ENCODE measurements at regions of chr5 and their contacts with region 1.

Region 1: GRCh38 chr5:72018146-72018803 is 89.0 kb upstream of the MAP1B start:
- DNase-seq: peak; percentile 36 to 91
- H3K4me3 ChIP-seq: no peak overlapping the region
- H3K27ac ChIP-seq: no peak overlapping the region
- H3K4me1 ChIP-seq: peaks cover 0 to 5% (median 1%) of the 10 kb centered on the region in 4 experiments; a peak in 2 of 7 replicates
- H3K27me3 ChIP-seq: no peaks in the 10 kb centered on the region
- CTCF ChIP-seq: peak; percentile 74 to 98 (median 76)
- EP300 ChIP-seq: no peak
- POLR2A ChIP-seq: no peak
- RAD21 ChIP-seq: peak; percentile 77 to 82

Region 2: DNA sequence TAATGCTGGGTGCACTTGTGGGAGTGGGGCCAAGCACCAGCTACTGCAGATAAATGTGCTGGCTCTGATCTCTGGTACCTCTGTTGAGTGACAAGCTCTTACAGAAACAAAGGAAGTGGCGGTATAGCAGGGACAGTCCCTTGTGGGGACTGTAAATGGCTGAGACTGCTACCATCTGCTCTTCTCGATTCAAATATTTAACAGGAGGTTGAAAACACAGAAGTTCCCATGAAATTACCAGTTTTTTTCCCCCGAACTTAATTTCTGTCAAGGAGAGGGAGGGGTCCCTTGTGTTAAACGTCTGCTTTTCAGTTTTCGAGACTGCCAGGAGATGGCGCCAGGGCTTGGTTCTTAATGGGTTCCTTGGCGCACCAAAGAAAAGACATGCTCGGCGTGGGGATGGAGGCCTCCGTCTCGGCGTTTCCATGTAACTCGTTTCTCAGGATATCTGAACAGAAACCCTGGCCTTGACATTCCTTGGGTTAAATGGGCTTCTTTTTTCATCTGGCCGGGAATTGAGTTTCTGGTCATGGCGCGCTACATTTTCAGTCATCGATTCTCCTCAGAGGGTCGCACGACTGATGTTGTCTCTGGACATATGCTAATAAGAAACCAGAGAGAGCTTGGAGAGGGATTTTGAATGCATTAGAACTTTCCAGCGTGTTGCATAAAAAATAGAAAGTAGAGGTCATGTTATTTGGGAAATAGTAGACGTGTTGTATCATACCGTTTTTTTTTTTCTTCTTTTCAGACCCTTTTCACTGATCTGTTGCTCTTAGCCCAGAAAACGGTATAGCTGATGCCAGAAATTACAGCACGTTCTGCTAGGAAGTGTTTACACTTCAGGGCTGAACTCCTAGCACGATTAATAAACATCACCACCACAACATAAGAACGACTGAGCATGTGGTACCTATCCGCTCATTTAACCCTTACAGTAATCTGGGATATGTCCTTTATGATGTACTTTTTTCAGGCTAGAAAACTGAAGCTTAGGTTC is 235.2 kb before region 1 on chr5:
- CTCF ChIA-PET with region 1: interaction called, 24 read pairs
- POLR2A ChIA-PET with region 1: no interaction called
- DNase-seq: peak; percentile 54 to 89
- H3K4me3 ChIP-seq: no peak overlapping the region
- H3K27ac ChIP-seq: no peak overlapping the region
- H3K4me1 ChIP-seq: peaks cover 0 to 6% (median 4%) of the 10 kb centered on the region in 4 experiments; a peak in 5 of 7 replicates
- H3K27me3 ChIP-seq: no peaks in the 10 kb centered on the region
- CTCF ChIP-seq: peak; percentile 64 to 80 (median 79)
- EP300 ChIP-seq: no peak
- POLR2A ChIP-seq: no peak
- RAD21 ChIP-seq: peak; percentile 93 to 96

Region 3: DNA sequence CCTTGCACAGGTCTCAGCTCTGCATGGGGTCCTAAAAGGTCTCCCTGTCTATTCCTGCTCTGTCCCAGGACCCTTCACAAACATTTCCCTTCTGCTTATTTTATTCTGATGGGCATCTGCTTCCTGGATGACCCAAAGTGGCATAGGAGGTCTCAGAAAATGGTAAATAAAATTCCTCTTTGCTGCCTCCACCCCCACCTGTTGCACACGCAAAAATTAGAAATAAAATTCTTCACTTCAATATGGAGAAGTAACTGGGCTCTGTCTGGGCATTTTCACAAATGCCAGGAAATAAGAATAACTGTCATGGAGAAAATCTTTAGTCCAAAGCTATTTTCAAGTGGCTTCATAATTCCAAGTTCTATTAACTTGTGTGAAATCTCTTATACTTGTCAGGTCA is 17.6 kb before region 1 on chr5:
- CTCF ChIA-PET with region 1: interaction called, 17 read pairs
- POLR2A ChIA-PET with region 1: interaction called, 3 read pairs
- DNase-seq: no peak
- H3K4me3 ChIP-seq: no peak overlapping the region
- H3K27ac ChIP-seq: no peak overlapping the region
- H3K4me1 ChIP-seq: peaks cover 0 to 1% (median under 1%) of the 10 kb centered on the region in 4 experiments; a peak in 2 of 7 replicates
- H3K27me3 ChIP-seq: no peaks in the 10 kb centered on the region
- CTCF ChIP-seq: no peak
- EP300 ChIP-seq: no peak
- POLR2A ChIP-seq: no peak
- RAD21 ChIP-seq: no peak

Region 4: DNA sequence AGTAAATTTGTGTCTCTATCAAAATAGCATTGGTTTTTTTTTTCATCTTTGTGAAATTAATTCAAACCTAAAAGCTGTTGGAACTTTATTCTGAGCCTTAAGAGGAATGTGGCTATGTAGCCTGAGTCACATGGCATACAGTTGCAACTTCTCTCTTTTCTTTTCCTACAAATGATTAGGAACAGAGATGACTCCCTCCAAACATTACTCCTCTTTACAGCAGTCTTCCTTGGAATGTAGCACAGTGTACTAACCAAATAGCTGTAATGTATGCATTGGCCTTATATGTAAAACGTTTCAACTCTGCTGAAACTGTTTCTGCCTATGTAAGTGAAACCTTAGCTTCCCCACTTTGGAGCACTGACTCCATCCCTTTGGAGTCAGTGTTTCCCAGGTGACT is 11.9 kb before region 1 on chr5:
- CTCF ChIA-PET with region 1: interaction called, 17 read pairs
- POLR2A ChIA-PET with region 1: interaction called, 3 read pairs
- DNase-seq: no peak
- H3K4me3 ChIP-seq: no peak overlapping the region
- H3K27ac ChIP-seq: no peak overlapping the region
- H3K4me1 ChIP-seq: peaks cover 0 to 12% (median 2%) of the 10 kb centered on the region in 4 experiments; a peak in 5 of 7 replicates
- H3K27me3 ChIP-seq: no peaks in the 10 kb centered on the region
- CTCF ChIP-seq: no peak
- EP300 ChIP-seq: no peak
- POLR2A ChIP-seq: no peak
- RAD21 ChIP-seq: no peak

Region 5: GRCh38 chr5:72032788-72033187 is 14.5 kb after region 1 on chr5:
- CTCF ChIA-PET with region 1: interaction called, 37 read pairs
- POLR2A ChIA-PET with region 1: no interaction called
- DNase-seq: no peak
- H3K4me3 ChIP-seq: peak overlapping the region in 1 of 4 experiments; percentile 20; a peak in 1 of 8 replicates
- H3K27ac ChIP-seq: no peak overlapping the region
- H3K4me1 ChIP-seq: peaks cover 0 to 22% (median 13%) of the 10 kb centered on the region in 4 experiments
- H3K27me3 ChIP-seq: no peaks in the 10 kb centered on the region; a peak in 1 of 7 replicates
- CTCF ChIP-seq: no peak
- EP300 ChIP-seq: no peak
- POLR2A ChIP-seq: no peak
- RAD21 ChIP-seq: no peak; a peak in 1 of 4 replicates

Region 6: GRCh38 chr5:72079296-72079695 is 61.0 kb after region 1 on chr5:
- CTCF ChIA-PET with region 1: interaction called, 10 read pairs
- POLR2A ChIA-PET with region 1: no interaction called
- DNase-seq: peak in 1 of 2 experiments; percentile 58
- H3K4me3 ChIP-seq: no peak overlapping the region
- H3K27ac ChIP-seq: no peak overlapping the region
- H3K4me1 ChIP-seq: peaks cover 0 to 2% (median under 1%) of the 10 kb centered on the region in 4 experiments; a peak in 2 of 7 replicates
- H3K27me3 ChIP-seq: no peaks in the 10 kb centered on the region
- CTCF ChIP-seq: peak; percentile 60 to 68 (median 62)
- EP300 ChIP-seq: no peak
- POLR2A ChIP-seq: no peak
- RAD21 ChIP-seq: peak; percentile 58 to 67

Measured in H1 (cell line).